ENCODE measurements at regions of chr1 and their contacts with region 1.

Region 1: GRCh38 chr1:7539769-7540175 is 231.3 kb upstream of the VAMP3 start:
- DNase-seq: peak; percentile 81
- H3K4me3 ChIP-seq: no peak overlapping the region
- H3K27ac ChIP-seq: no peak overlapping the region
- H3K4me1 ChIP-seq: no peaks in the 10 kb centered on the region
- H3K27me3 ChIP-seq: peaks cover 2% of the 10 kb centered on the region
- CTCF ChIP-seq: peak; percentile 77 to 94

Region 2: DNA sequence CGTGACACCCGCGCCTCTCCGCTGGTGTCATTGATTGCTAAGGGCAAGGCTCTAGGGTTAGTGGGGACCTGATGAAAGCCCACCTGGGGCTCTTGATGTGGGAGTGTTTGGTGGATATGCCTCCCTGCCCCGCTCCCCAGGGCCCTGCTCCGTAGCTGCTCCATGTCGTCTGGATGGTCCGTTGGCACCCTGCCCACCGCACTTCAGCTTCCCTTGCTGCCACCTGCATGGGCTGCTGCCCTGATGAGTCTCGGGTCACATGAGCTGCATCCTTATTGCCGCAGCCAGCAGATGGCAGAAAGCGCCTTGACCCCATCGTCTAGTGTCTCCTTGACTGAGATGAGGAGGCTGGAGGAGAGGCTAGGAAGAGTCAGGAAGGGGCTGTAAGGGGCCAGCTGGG is 315.1 kb before region 1 on chr1:
- CTCF ChIA-PET with region 1: no interaction called
- dilution Hi-C with region 1: no loop called
- in situ Hi-C with region 1: loop called in 1 of 2 experiments (anchors 10 kb)
- intact Hi-C with region 1: loop called (anchors 5 kb)
- DNase-seq: no peak
- H3K4me3 ChIP-seq: no peak overlapping the region
- H3K27ac ChIP-seq: no peak overlapping the region
- H3K4me1 ChIP-seq: no peaks in the 10 kb centered on the region
- H3K27me3 ChIP-seq: no peaks in the 10 kb centered on the region
- CTCF ChIP-seq: peak; percentile 6 to 17

Region 3: GRCh38 chr1:7454052-7454815 is 85.5 kb before region 1 on chr1:
- CTCF ChIA-PET with region 1: no interaction called
- dilution Hi-C with region 1: no loop called
- in situ Hi-C with region 1: no loop called
- intact Hi-C with region 1: loop called (anchors 1 kb)
- DNase-seq: no peak
- H3K4me3 ChIP-seq: no peak overlapping the region
- H3K27ac ChIP-seq: no peak overlapping the region
- H3K4me1 ChIP-seq: peaks cover 9% of the 10 kb centered on the region
- H3K27me3 ChIP-seq: no peaks in the 10 kb centered on the region
- CTCF ChIP-seq: peak; percentile 7 to 33

Measured in mammary epithelial cell (primary cell).